ENCODE measurements at regions of chr18 and their contacts with region 1.

Region 1: DNA sequence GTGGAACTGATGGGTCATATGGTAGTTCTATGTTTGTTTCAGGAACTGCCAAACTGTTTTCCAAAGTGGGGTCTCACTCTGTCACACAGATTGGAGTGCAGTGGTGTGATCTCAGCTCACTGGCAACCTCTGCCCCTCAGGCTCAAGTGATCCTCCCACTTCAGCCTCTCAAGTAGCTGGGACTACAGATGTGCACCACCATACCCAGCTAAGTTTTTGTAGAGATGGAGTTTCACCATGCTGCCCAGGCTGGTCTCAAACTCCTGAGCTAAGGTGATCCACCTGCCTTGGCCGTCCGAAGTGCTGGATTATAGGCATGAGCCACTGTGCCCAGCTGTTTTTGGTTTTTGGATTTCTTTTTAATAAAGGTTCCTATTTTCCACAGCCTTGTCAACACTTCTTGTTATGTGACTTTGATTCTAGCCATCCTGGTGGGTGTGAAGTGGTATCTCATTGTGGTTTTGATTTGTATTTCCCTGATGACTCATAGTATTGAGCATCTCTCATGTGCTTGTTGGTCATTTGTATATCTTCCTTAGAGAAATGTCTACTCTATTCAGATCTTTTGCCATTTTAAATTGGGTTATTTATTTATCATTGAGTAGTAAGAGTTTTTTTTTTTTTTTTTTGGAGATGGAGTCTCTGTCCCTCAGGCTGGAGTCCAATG is 22.8 kb downstream of the NPC1 start:
- DNase-seq: no peak
- H3K4me3 Mint-ChIP-seq: no peak overlapping the region
- H3K27ac Mint-ChIP-seq: peak overlapping the region; percentile 2
- H3K4me1 Mint-ChIP-seq: peaks cover 7% of the 10 kb centered on the region
- H3K27me3 Mint-ChIP-seq: no peaks in the 10 kb centered on the region

Region 2: GRCh38 chr18:23495723-23496440 is 67.6 kb before region 1 on chr18:
- intact Hi-C with region 1: no loop called
- DNase-seq: no peak
- H3K4me3 Mint-ChIP-seq: no peak overlapping the region
- H3K27ac Mint-ChIP-seq: no peak overlapping the region
- H3K4me1 Mint-ChIP-seq: peaks cover 20% of the 10 kb centered on the region
- H3K27me3 Mint-ChIP-seq: no peaks in the 10 kb centered on the region

Region 3: DNA sequence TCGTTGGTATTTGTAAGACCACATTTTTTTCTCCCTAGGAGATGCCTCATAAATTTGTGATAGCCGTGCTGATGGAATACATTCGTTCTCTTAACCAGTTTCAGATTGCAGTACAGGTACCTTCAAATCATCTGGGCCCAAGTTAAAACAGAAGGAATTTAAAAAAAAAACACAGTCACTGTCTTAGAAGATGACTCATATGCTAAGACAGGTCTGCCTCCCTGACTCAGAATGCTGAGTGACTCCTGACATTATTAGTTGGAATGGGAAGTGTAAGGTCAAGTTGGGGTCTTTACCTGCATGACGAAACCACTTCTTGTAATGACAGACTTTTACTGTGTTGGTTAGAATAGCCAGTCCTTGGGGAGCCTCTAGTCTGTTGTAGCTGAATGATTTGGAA is 33.9 kb before region 1 on chr18:
- intact Hi-C with region 1: no loop called
- DNase-seq: no peak
- H3K4me3 Mint-ChIP-seq: no peak overlapping the region
- H3K27ac Mint-ChIP-seq: peak overlapping the region; percentile 4
- H3K4me1 Mint-ChIP-seq: peaks cover 14% of the 10 kb centered on the region
- H3K27me3 Mint-ChIP-seq: no peaks in the 10 kb centered on the region

Region 4: GRCh38 chr18:23540867-23541266 is 22.6 kb before region 1 on chr18:
- intact Hi-C with region 1: loop called (anchors 2 kb)
- DNase-seq: peak; percentile 26
- H3K4me3 Mint-ChIP-seq: peak overlapping the region; percentile 43
- H3K27ac Mint-ChIP-seq: peak overlapping the region; percentile 71
- H3K4me1 Mint-ChIP-seq: peaks cover 39% of the 10 kb centered on the region
- H3K27me3 Mint-ChIP-seq: no peaks in the 10 kb centered on the region

Region 5: GRCh38 chr18:23573626-23574431 is 10.3 kb after region 1 on chr18:
- intact Hi-C with region 1: loop called (anchors 1 kb)
- DNase-seq: peak; percentile 27
- H3K4me3 Mint-ChIP-seq: peak overlapping the region; percentile 63
- H3K27ac Mint-ChIP-seq: peak overlapping the region; percentile 89
- H3K4me1 Mint-ChIP-seq: peaks cover 49% of the 10 kb centered on the region
- H3K27me3 Mint-ChIP-seq: no peaks in the 10 kb centered on the region

Measured in activated T-helper 1 cell treated with anti-CD3 and anti-CD28 coated beads, Interleukin-12 subunit alpha, Interleukin-12 subunit beta, Interleukin-2, Interleukin-4 antibody, amounts not matched to agents 30 ng/mL and 10 ng/mL and 1 ng/mL, durations not matched to agents 14 hours and 24 hours and 36 hours (primary cell).